ENCODE measurements at regions of chr1 and their contacts with region 1.

Region 1: DNA sequence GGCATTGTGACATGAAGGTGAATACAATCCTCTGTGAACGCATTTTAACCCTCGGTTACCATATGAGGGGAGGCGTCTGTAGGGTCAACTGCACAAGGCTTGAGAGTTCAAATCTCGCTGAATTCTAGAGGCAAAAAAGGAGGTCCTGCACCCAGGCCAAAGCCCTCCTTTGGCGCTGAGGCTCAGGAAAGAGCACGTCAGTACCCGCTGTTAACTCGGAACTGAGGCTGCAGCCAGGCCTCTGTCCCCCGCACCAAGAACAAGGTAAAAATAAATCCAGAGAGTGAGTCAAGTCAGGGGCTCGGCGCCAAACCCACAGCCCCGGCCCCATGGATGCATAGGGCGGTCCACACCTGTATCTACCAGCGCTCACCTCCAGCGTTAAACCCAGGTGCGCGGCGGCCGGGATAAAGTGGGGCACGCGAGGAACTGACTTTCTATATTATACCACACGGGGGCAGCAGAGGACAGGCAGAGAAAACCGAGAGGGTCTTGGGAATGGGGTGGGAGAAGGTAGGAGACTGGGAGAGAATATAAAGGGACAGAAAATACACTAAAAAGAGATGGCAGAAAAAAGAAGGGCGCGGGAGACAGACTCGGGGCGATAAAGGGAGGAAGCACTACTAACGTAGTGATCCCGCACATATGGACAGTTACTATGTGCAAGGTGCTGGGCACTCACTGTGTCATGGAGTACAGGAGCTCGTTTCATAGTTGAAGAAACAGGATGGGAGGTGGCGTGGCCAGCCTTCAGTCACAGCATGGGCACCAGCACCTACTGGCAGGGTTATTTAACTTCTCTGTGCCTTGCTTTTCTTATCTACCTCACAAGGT is 54.8 kb downstream of the DMRTA2 start:
- DNase-seq: peak; percentile 15 to 32
- ATAC-seq: peak; percentile 83 to 86
- H3K4me3 ChIP-seq: no peak overlapping the region
- H3K27ac ChIP-seq: no peak overlapping the region
- H3K4me1 ChIP-seq: no peaks in the 10 kb centered on the region
- CTCF ChIP-seq: peak; percentile 75
- EP300 ChIP-seq: no peak
- POLR2A ChIP-seq: no peak
- RAD21 ChIP-seq: peak; percentile 85 to 92

Region 2: GRCh38 chr1:50268049-50268448 is 100.3 kb before region 1 on chr1:
- CTCF ChIA-PET with region 1: no interaction called
- POLR2A ChIA-PET with region 1: no interaction called
- DNase-seq: no peak
- ATAC-seq: no peak
- H3K4me3 ChIP-seq: no peak overlapping the region
- H3K27ac ChIP-seq: no peak overlapping the region
- H3K4me1 ChIP-seq: no peaks in the 10 kb centered on the region
- CTCF ChIP-seq: no peak
- EP300 ChIP-seq: no peak
- POLR2A ChIP-seq: no peak
- RAD21 ChIP-seq: no peak

Region 3: DNA sequence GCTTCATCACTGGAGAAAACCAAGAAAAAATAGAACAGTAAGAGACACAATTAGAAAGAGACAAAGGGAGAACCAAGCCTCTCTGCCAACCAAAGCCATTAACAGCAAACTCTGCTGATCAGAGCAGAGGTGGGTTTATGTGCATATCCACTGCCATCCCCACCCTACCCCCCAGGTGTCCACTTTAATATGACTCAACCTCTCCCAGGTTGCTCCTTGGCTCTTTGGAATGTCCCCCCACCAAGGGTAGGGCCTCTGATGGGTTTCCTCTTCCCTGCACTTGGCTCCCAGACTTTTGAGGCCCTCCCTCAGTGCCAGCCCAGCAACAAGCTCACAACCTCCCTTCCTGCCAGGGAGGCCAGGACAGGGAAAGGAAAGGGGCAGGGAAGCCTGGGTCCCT is 50.0 kb before region 1 on chr1:
- CTCF ChIA-PET with region 1: no interaction called
- POLR2A ChIA-PET with region 1: no interaction called
- DNase-seq: no peak
- ATAC-seq: no peak
- H3K4me3 ChIP-seq: no peak overlapping the region
- H3K27ac ChIP-seq: no peak overlapping the region
- H3K4me1 ChIP-seq: no peaks in the 10 kb centered on the region
- CTCF ChIP-seq: no peak
- EP300 ChIP-seq: no peak
- POLR2A ChIP-seq: no peak
- RAD21 ChIP-seq: no peak

Region 4: DNA sequence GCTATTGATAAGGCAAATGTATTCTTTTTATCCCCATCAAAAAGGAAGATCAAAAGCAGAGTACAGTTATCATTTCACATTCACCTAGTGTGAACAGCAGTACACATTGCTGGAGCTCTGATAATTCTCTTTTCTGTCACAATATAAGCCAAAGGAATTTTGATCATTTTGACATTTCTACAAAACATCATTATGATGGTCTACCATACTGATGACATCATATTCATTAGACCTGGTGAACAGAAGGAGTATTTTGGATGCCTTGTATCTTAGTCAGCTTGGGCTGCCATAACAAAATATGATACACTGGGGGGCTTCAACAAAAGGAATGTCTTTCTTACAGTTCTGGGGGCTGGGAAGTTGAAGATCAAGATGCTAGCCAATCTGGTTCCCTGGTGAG is 18.0 kb after region 1 on chr1:
- CTCF ChIA-PET with region 1: no interaction called
- POLR2A ChIA-PET with region 1: no interaction called
- DNase-seq: no peak
- ATAC-seq: no peak
- H3K4me3 ChIP-seq: no peak overlapping the region
- H3K27ac ChIP-seq: no peak overlapping the region
- H3K4me1 ChIP-seq: no peaks in the 10 kb centered on the region
- CTCF ChIP-seq: no peak
- EP300 ChIP-seq: no peak
- POLR2A ChIP-seq: no peak
- RAD21 ChIP-seq: no peak

Region 5: GRCh38 chr1:50605186-50605875 is 236.9 kb after region 1 on chr1:
- CTCF ChIA-PET with region 1: interaction called, 33 read pairs
- POLR2A ChIA-PET with region 1: no interaction called
- DNase-seq: peak; percentile 19 to 35
- ATAC-seq: peak; percentile 64 to 81; a peak in 4 of 6 replicates
- H3K4me3 ChIP-seq: no peak overlapping the region
- H3K27ac ChIP-seq: no peak overlapping the region
- H3K4me1 ChIP-seq: peaks cover 13% of the 10 kb centered on the region; the same call in 1 of the 3 replicates
- CTCF ChIP-seq: peak; percentile 55
- EP300 ChIP-seq: no peak
- POLR2A ChIP-seq: no peak
- RAD21 ChIP-seq: peak; percentile 49 to 64; a peak in 4 of 5 replicates

Region 6: DNA sequence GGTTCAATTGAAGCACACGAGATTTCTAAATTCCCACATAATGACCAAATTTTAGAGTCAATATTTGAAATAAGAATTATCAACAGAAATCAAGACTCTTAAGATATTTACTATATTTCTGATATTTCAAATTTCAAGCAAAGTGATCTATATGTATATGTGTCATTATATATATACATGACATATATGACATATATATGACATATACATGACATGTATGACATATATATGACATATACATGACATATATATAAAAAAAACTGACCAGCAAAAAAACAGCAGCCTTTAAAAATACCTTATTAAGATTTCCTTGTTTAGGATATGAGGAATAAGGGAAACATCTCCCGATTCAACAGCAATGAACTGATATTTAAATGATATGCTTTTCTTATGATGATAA is 325.4 kb after region 1 on chr1:
- CTCF ChIA-PET with region 1: no interaction called
- POLR2A ChIA-PET with region 1: no interaction called
- DNase-seq: no peak
- ATAC-seq: no peak
- H3K4me3 ChIP-seq: no peak overlapping the region
- H3K27ac ChIP-seq: no peak overlapping the region
- H3K4me1 ChIP-seq: peaks cover 13% of the 10 kb centered on the region; the same call in 2 of the 3 replicates
- CTCF ChIP-seq: no peak
- EP300 ChIP-seq: no peak
- POLR2A ChIP-seq: no peak
- RAD21 ChIP-seq: no peak

Region 7: DNA sequence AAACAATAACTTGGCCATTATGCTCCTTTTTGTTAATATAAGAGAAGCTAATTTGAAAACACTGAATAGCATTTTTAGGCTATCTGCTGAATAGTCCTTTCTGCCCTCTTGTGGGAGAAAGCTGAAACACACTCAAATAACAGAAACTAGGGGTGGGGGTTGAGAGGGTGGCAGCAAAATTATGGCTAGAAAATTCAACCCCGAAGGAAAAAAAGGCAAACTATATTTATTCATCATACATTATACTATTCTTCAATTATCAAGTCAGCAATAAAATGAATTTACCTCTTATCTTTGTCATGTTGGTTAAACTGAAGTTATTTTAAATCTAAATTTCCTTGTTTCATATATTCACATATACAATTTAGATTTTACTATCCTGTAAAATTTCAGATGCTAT is 335.7 kb after region 1 on chr1:
- CTCF ChIA-PET with region 1: interaction called, 22 read pairs
- POLR2A ChIA-PET with region 1: no interaction called
- DNase-seq: peak; percentile 17 to 25
- ATAC-seq: peak in 1 of 2 experiments; percentile 51; a peak in 2 of 6 replicates
- H3K4me3 ChIP-seq: no peak overlapping the region
- H3K27ac ChIP-seq: no peak overlapping the region
- H3K4me1 ChIP-seq: no peaks in the 10 kb centered on the region
- CTCF ChIP-seq: peak; percentile 65
- EP300 ChIP-seq: no peak
- POLR2A ChIP-seq: no peak
- RAD21 ChIP-seq: peak; percentile 30 to 44; a peak in 4 of 5 replicates